ENCODE measurements at regions of chr19 and their contacts with region 1.

Region 1: GRCh38 chr19:15684831-15685230 is 11.9 kb downstream of the CYP4F12 start:
- DNase-seq: no peak
- H3K4me3 ChIP-seq: no peak overlapping the region
- CTCF ChIP-seq: no peak
- POLR2A ChIP-seq: no peak

Region 2: DNA sequence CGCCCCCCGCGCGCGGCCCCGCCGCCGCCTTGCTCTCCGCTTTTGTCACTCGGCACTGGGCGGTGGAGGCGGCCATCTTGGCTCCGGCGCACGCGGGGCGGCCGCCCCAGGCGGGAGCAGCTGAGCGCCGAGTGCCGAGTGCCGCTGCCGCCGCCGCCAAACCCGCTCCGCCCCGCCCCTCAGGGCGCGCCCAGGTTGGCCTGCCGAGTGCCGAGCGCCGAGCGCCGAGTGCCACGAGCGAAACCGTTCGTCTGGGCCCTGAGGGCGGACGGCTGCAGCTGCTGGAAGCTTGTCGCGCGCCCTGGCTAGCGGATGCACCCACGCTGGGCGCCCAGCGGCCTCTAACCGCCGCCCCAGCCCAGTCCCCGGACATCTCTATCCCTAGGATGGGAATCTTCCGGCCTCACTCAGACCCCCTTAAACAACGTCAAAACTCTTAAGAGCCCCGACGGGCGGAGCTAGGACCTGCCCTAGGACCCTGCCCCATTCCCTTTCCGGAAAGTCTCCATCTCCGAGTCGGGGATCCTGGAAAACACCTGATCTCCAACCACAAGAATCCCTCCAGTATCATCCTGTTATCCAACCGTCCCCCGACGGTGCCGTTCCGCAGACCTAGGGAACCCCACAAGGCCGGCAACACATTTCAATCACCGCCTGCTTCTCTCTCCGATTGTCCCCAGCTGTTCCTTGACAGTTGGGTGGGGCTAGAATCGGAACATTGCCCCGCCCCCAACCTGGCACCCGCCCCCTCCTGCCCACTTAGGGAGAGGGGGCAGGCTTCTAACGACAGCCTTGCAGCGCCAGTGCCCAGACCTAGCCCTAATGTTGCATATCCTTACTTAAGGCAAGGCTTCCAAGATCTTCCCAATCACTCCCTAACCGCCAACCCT is 252.0 kb before region 1 on chr19:
- intact Hi-C with region 1: no loop called
- DNase-seq: peak; percentile 80 to 96
- H3K4me3 ChIP-seq: peak overlapping the region; percentile 69
- CTCF ChIP-seq: no peak
- POLR2A ChIP-seq: no peak

Region 3: GRCh38 chr19:15516363-15516762 is 168.5 kb before region 1 on chr19:
- intact Hi-C with region 1: no loop called
- DNase-seq: no peak
- H3K4me3 ChIP-seq: no peak overlapping the region
- CTCF ChIP-seq: no peak
- POLR2A ChIP-seq: no peak

Region 4: GRCh38 chr19:15652559-15653278 is 32.1 kb before region 1 on chr19:
- intact Hi-C with region 1: loop called (anchors 2 kb)
- DNase-seq: no peak
- H3K4me3 ChIP-seq: no peak overlapping the region
- CTCF ChIP-seq: no peak
- POLR2A ChIP-seq: no peak

Measured in lower leg skin (tissue), 4 donors.